ENCODE measurements at regions of chr7 and their contacts with region 1.

Region 1: GRCh38 chr7:53340220-53340619 is 304.8 kb downstream of the POM121L12 start:
- DNase-seq: no peak
- ATAC-seq: no peak
- H3K4me3 ChIP-seq: no peak overlapping the region
- H3K4me3 Mint-ChIP-seq: no peak overlapping the region
- H3K27ac ChIP-seq: no peak overlapping the region
- H3K27ac Mint-ChIP-seq: no peak overlapping the region
- H3K4me1 ChIP-seq: no peaks in the 10 kb centered on the region
- H3K4me1 Mint-ChIP-seq: no peaks in the 10 kb centered on the region
- H3K27me3 ChIP-seq: no peaks in the 10 kb centered on the region
- H3K27me3 Mint-ChIP-seq: no peaks in the 10 kb centered on the region
- CTCF ChIP-seq: no peak

Region 2: DNA sequence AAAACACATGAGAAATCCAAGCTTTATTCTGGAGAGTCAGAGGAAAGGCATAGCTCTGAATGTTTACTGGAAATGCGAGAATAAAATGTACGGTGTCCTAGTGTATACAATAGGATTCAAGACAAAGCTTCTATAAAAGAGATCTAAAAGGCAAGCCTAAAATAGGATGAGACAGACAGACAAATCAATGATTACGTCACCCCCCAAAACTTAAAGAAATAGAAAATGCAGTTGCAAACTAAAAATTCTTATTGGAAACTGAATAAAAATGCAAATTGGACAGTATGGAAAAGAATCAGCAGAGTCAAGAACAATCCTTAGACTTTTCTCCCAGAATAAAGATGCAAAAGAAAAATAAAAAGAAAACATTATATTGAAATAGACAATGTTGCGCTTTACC is 58.9 kb before region 1 on chr7:
- CTCF ChIA-PET with region 1: no interaction called
- POLR2A ChIA-PET with region 1: no interaction called
- intact Hi-C with region 1: loop called in 1 of 2 experiments (anchors 10 kb)
- DNase-seq: no peak
- ATAC-seq: no peak
- H3K4me3 ChIP-seq: no peak overlapping the region
- H3K4me3 Mint-ChIP-seq: no peak overlapping the region
- H3K27ac ChIP-seq: no peak overlapping the region
- H3K27ac Mint-ChIP-seq: no peak overlapping the region
- H3K4me1 ChIP-seq: no peaks in the 10 kb centered on the region
- H3K4me1 Mint-ChIP-seq: no peaks in the 10 kb centered on the region
- H3K27me3 ChIP-seq: no peaks in the 10 kb centered on the region
- H3K27me3 Mint-ChIP-seq: no peaks in the 10 kb centered on the region
- CTCF ChIP-seq: no peak